GM12878 (cell line): ENCODE measurements at regions of chr3 and their contacts with region 1.

Region 1: DNA sequence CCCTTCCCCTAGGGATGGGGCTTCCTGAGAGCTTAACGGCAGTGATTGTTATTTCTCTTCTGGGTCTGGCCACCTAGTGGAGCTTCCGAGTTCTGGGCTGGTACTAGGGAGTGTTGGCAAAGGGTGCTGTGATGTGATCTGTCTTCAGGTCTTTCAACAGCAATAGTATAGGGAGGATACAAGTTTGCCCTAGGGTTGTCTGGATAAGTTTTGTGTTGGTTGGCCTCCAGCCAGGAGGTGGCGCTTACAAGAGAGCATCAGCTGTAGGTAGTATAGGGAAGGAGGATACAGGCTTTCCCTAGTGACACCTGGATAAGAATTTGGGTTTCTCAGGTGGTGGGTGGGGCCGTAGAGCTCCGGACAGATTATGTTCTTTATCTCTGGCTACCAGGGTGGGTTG is 19.2 kb upstream of the CPOX start:
- DNase-seq: no peak
- ATAC-seq: peak; percentile 83
- H3K4me3 ChIP-seq: no peak overlapping the region
- H3K27ac ChIP-seq: peak overlapping the region; percentile 80
- H3K4me1 ChIP-seq: peaks cover 7% of the 10 kb centered on the region; the same call in 1 of the 2 replicates
- H3K27me3 ChIP-seq: no peaks in the 10 kb centered on the region
- CTCF ChIP-seq: peak; percentile 16 to 42 (median 39); a peak in 3 of 6 replicates
- EP300 ChIP-seq: no peak
- POLR2A ChIP-seq: no peak
- RAD21 ChIP-seq: peak; percentile 54; the same call in 1 of the 2 replicates

Region 2: DNA sequence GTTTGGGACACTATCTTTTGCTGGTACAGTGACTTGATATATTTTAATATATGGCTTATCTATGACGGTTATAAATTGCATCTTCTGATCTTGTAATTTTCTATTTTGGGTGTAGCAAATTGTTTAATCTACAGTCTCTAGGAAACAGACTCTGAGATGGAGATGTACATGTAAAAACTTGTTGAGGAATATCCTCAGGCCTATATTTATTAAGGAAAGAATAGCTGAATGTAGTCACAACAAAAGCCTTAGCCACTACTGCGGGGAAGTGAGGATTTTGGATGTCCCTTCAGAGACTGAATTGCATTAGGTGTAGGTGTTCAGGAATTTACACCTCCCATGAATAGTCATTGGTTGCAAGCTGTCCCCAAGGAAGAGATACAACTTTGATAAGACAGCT is 236.0 kb before region 1 on chr3:
- CTCF ChIA-PET with region 1: no interaction called
- POLR2A ChIA-PET with region 1: no interaction called
- RAD21 ChIA-PET with region 1: no interaction called
- SMC1A ChIA-PET with region 1: no interaction called
- in situ Hi-C with region 1: no loop called
- intact Hi-C with region 1: no loop called
- DNase-seq: no peak
- ATAC-seq: no peak
- H3K4me3 ChIP-seq: no peak overlapping the region
- H3K27ac ChIP-seq: no peak overlapping the region
- H3K4me1 ChIP-seq: no peaks in the 10 kb centered on the region
- H3K27me3 ChIP-seq: no peaks in the 10 kb centered on the region
- CTCF ChIP-seq: no peak
- EP300 ChIP-seq: no peak
- POLR2A ChIP-seq: no peak
- RAD21 ChIP-seq: no peak

Region 3: DNA sequence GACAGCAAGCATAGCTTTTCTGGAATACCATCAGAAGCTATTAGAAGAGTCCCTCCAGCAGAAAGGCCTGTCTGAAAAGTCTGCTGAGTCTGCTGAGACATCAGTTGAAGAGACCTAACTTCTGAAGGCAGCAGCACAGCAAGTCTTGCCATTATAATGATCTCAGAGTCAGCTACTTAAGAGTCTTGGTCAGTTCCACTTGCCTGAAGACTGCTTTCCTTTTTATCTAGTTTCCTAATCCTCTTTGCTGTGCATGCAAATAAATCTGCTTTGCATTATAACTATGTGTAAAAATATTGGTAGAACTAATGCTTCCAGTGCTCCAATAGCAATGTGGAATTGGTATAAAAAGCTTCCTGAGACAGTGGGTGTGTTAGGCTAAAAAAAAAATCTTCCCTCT is 15.7 kb after region 1 on chr3:
- CTCF ChIA-PET with region 1: interaction called, 6 read pairs
- POLR2A ChIA-PET with region 1: no interaction called
- RAD21 ChIA-PET with region 1: interaction called, 3 read pairs
- SMC1A ChIA-PET with region 1: interaction called, 11 read pairs
- in situ Hi-C with region 1: no loop called
- intact Hi-C with region 1: no loop called
- DNase-seq: no peak
- ATAC-seq: no peak
- H3K4me3 ChIP-seq: no peak overlapping the region
- H3K27ac ChIP-seq: no peak overlapping the region
- H3K4me1 ChIP-seq: no peaks in the 10 kb centered on the region
- H3K27me3 ChIP-seq: no peaks in the 10 kb centered on the region
- CTCF ChIP-seq: no peak
- EP300 ChIP-seq: no peak
- POLR2A ChIP-seq: no peak
- RAD21 ChIP-seq: no peak

Region 4: DNA sequence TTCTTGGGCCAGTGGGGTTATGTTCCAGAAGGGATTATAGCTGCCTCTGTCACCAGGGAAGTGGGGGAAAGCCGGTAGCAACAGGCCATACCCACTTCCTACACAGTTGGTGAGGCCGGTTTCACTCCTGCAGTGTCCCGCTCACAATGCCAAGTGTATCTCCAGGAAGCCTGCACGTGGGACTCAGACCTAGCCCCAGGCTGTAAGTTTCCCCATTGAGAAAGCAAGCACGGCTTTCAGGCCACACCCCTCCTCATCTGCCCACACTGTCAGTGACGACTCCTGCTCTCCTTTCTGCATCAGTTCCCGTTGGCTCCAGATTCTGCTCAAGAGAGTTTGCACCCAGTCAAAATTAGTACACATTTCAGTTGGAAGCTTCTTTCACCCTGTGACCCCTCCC is 32.5 kb after region 1 on chr3:
- CTCF ChIA-PET with region 1: interaction called, 11 read pairs
- POLR2A ChIA-PET with region 1: interaction called, 13 read pairs
- RAD21 ChIA-PET with region 1: interaction called, 15 read pairs
- SMC1A ChIA-PET with region 1: interaction called, 22 read pairs
- in situ Hi-C with region 1: no loop called
- intact Hi-C with region 1: no loop called
- DNase-seq: no peak
- ATAC-seq: peak; percentile 55
- H3K4me3 ChIP-seq: no peak overlapping the region
- H3K27ac ChIP-seq: no peak overlapping the region
- H3K4me1 ChIP-seq: peaks cover 31% of the 10 kb centered on the region
- H3K27me3 ChIP-seq: no peaks in the 10 kb centered on the region
- CTCF ChIP-seq: no peak
- EP300 ChIP-seq: no peak
- POLR2A ChIP-seq: no peak
- RAD21 ChIP-seq: no peak

Region 5: DNA sequence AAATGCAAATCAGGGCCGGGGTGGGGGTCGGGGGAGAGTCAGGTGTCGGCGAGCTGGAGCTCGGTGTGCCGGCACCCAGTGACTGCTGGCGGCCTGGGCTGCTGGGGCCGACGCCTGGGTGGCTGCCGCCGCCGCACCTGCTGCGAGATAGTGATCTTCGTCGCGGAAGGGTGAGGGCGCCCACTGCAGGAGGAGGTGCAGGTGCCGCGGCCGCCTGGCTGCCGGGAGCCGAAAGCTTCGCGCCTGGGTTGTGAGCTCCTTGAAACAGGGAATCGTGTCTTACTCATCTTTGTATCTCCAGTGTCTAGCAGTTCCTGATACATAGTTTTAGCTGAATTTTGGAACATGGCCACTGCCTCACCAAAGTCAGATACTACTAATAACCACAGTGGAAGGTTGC is 44.9 kb after region 1 on chr3:
- CTCF ChIA-PET with region 1: interaction called, 19 read pairs
- POLR2A ChIA-PET with region 1: no interaction called
- RAD21 ChIA-PET with region 1: interaction called, 11 read pairs
- SMC1A ChIA-PET with region 1: interaction called, 25 read pairs
- in situ Hi-C with region 1: no loop called
- intact Hi-C with region 1: loop called (anchors 2 kb)
- DNase-seq: no peak
- ATAC-seq: peak; percentile 98
- H3K4me3 ChIP-seq: no peak overlapping the region; the same call in 1 of the 2 replicates
- H3K27ac ChIP-seq: no peak overlapping the region
- H3K4me1 ChIP-seq: peaks cover 3% of the 10 kb centered on the region
- H3K27me3 ChIP-seq: no peaks in the 10 kb centered on the region
- CTCF ChIP-seq: peak; percentile 62 to 71 (median 70)
- EP300 ChIP-seq: no peak
- POLR2A ChIP-seq: no peak
- RAD21 ChIP-seq: peak; percentile 73

Region 6: DNA sequence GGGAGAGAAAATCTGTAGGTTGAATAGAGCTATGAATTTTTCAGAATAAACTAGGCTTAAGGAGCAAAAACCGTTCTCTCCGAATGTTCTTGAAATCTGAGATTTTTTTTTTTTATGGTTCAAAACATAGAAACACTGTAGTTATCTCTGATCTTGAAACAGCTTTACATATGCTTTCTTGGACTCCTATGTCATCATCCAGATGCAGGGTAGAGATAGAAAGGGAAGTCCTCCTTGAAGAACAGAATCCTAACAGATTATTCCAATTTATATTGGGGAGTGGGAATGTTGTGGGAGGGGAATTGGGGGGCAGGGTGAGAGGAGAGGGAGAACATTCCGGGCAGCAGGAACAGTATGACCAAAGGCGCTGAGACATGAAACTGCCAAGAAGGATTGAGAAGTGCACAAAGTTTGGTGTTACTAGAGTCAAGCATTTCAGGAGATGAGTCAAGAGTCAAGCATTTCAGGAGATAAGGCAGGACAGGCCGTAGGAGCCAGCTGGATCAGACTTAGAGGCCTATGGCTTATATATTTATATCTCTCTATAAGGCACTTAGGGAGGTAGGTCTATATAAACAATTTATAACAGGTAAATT is 128.6 kb after region 1 on chr3:
- CTCF ChIA-PET with region 1: interaction called, 4 read pairs
- POLR2A ChIA-PET with region 1: no interaction called
- RAD21 ChIA-PET with region 1: interaction called, 19 read pairs
- SMC1A ChIA-PET with region 1: interaction called, 7 read pairs
- in situ Hi-C with region 1: no loop called
- intact Hi-C with region 1: loop called (anchors 1 kb)
- DNase-seq: no peak
- ATAC-seq: no peak
- H3K4me3 ChIP-seq: no peak overlapping the region
- H3K27ac ChIP-seq: no peak overlapping the region
- H3K4me1 ChIP-seq: peaks cover 9% of the 10 kb centered on the region
- H3K27me3 ChIP-seq: no peaks in the 10 kb centered on the region
- CTCF ChIP-seq: no peak
- EP300 ChIP-seq: no peak
- POLR2A ChIP-seq: no peak
- RAD21 ChIP-seq: no peak

Region 7: DNA sequence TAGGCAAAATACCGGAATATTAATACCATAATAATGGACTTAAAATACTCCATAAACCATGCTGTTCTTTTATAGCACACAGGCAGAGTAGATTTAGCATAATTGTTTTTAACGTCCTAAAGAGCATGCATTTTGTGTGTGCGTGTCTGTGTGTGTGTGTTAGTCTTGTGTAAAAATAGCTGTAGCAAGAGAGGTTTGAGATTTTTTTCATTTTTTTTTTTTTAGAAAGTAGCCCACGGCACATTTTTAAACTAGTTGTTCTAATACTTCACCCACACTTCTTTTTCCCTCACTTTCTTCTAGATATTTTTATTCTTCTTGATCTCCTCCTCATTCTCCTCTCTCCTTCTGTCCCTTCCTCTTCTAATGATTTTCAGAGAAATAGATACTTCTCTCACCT is 143.0 kb after region 1 on chr3:
- CTCF ChIA-PET with region 1: no interaction called
- POLR2A ChIA-PET with region 1: interaction called, 3 read pairs
- RAD21 ChIA-PET with region 1: interaction called, 4 read pairs
- SMC1A ChIA-PET with region 1: interaction called, 10 read pairs
- in situ Hi-C with region 1: no loop called
- intact Hi-C with region 1: no loop called
- DNase-seq: no peak
- ATAC-seq: no peak
- H3K4me3 ChIP-seq: no peak overlapping the region
- H3K27ac ChIP-seq: no peak overlapping the region
- H3K4me1 ChIP-seq: no peaks in the 10 kb centered on the region; the same call in 1 of the 2 replicates
- H3K27me3 ChIP-seq: no peaks in the 10 kb centered on the region
- CTCF ChIP-seq: no peak
- EP300 ChIP-seq: no peak
- POLR2A ChIP-seq: no peak
- RAD21 ChIP-seq: no peak

Region 8: DNA sequence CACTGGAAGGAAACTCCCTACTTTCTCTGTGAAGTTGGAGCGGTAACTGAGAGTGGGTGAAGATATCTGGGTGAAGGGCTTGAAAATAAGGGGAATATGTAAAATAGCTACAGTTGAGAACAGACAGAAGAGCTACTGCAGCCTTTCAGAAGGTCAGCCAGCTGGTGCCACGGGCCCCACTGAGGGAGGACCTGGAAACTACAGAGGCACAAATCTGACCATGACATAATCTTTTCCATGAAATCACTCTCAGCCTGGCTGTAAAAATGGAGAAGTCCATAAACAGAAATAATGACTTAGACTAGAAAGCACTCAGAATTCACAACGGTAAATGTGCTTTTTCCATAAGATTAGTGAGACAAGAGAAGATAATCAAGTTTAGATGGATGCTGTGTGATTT is 197.0 kb after region 1 on chr3:
- CTCF ChIA-PET with region 1: interaction called, 373 read pairs
- POLR2A ChIA-PET with region 1: no interaction called
- RAD21 ChIA-PET with region 1: interaction called, 15 read pairs
- SMC1A ChIA-PET with region 1: interaction called, 18 read pairs
- in situ Hi-C with region 1: no loop called
- intact Hi-C with region 1: no loop called
- DNase-seq: no peak
- ATAC-seq: peak; percentile 72
- H3K4me3 ChIP-seq: no peak overlapping the region
- H3K27ac ChIP-seq: no peak overlapping the region
- H3K4me1 ChIP-seq: no peaks in the 10 kb centered on the region
- H3K27me3 ChIP-seq: no peaks in the 10 kb centered on the region
- CTCF ChIP-seq: no peak
- EP300 ChIP-seq: no peak
- POLR2A ChIP-seq: no peak
- RAD21 ChIP-seq: no peak